Uterus (tissue), 4 donors: ENCODE measurements at regions of chrX and their contacts with region 1.

Region 1: DNA sequence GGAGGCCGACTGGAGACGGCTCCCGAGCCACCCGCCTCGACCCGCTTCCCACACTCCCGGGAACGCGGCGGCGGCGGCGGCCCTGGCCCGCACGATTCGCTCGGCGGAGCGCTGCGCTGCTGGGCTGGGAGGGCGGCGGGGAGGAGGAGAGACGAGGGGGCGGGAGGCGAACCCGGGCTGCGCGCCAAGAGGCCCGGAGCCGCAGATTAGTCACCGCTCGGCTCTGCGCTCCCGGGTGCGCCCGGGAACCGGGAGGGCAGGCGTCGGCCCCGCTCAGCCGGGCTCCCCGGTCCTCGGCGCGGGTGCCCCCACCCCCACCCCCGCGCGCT is 11.2 kb upstream of the BCOR start:
- DNase-seq: peak; percentile 82 to 84
- H3K4me3 ChIP-seq: peak overlapping the region; percentile 32 to 55
- H3K27ac ChIP-seq: peak overlapping the region; percentile 89 to 97
- H3K4me1 ChIP-seq: peaks cover 0 to 18% of the 10 kb centered on the region in 2 donors
- H3K27me3 ChIP-seq: peaks cover 3 to 17% of the 10 kb centered on the region in 2 donors
- CTCF ChIP-seq: no peak
- POLR2A ChIP-seq: peak in 1 of 2 donors; percentile 69

Region 2: DNA sequence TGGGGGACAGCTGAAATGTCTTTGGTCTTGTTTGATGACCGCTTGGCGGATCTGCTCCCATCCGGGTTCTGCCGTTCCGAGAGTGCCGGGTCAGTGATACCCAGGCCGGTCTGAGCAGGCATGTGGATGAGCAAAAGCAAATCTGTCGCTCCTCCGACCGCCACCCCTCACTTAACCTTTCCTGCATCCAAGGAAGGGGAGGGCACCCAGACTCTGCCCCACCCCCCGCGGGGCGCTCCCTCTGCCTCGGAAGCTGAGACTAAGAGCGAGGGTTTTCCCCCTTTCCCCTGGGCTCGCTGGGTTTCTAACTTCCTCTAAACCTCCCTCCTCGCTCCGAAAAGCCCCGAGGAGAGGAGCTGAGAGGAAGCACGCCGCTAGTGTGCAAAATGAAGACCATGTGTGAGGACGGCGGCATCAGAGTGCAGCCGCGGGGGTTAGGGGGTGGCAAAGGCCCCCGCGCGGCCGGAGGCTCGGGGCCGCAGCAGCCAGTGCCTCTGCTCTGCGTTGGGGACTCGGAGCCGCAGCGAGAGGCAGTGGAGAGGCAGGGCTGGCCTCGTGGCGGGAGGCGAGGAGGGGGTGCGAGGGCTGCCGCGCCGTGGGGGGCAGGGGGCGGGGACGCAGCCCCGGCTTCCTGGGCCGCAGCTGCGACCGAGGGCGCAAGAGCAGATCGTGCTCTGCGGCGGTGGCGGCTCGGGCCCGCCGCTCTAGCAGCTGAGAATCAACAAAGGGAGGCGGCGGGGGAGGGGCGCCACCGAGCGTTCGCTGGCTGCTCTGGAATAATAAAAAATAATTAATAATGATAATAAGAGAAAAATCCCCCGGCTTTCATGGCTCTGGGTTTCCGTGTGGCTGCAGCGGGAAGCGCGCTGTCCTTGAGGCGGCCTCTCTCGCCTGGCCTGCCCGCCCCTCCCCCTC is 44.7 kb after region 1 on chrX:
- intact Hi-C with region 1: loop called (anchors 5 kb)
- DNase-seq: peak in 1 of 2 donors; percentile 58
- H3K4me3 ChIP-seq: peak overlapping the region; percentile 3 to 45
- H3K27ac ChIP-seq: peak overlapping the region; percentile 43 to 80
- H3K4me1 ChIP-seq: no peaks in the 10 kb centered on the region
- H3K27me3 ChIP-seq: peaks cover 0 to 3% of the 10 kb centered on the region in 2 donors
- CTCF ChIP-seq: peak in 1 of 4 experiments; percentile 37
- POLR2A ChIP-seq: no peak